A549 (cell line): ENCODE measurements at regions of chr17 and their contacts with region 1.

Region 1: DNA sequence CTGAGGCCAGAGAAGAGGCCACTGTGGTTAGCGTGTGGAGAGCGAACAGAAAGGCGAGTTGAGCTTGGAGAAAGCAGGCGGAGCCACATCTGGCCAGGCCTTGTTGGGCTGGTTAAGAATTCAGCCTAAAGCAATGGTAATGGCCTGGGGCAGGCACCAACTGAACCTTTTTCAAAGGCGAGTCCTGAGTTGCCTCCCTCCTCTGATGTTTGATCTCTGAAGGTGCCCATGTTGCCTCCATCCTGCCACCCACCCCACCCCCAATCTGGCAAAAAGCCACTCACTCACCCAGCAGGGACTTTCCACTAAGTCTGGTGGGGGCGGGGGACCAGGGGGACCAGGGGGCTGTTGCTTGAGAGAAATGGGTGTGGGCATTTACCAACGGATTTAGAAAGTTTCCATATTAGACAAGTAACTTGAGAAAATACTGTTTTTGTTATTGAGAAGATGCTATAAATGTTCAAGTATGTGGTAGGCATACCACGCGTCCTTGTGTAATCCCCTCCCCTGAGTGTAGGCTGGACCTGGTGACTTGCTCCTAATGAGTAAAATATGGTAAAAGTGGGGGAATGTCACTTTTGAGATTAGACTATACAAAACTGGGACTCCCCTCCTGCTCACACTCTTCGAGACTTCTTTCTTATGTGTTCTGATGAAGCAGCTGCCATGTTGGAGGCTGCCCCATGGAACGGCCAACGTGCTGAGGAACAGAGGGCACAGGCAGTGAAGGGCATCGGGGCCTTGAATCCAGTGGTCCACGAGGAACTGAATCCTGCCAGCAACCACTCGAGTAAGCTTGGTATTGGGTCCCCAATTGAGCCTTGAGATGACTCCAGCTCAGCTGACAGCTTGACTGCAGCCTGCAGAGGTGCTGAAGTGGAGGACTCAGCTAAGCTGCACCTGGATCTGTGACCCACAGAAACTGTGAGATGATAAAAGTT is 29.9 kb upstream of the TNS4 start:
- DNase-seq: no peak
- ATAC-seq: no peak
- H3K4me3 ChIP-seq: no peak overlapping the region
- H3K27ac ChIP-seq: peak overlapping the region; percentile 95 to 99
- H3K4me1 ChIP-seq: peaks cover 57% of the 10 kb centered on the region
- CTCF ChIP-seq: no peak
- EP300 ChIP-seq: no peak
- POLR2A ChIP-seq: no peak
- RAD21 ChIP-seq: no peak

Region 2: GRCh38 chr17:40303009-40303657 is 228.2 kb before region 1 on chr17:
- CTCF ChIA-PET with region 1: interaction called, 18 read pairs
- POLR2A ChIA-PET with region 1: no interaction called
- DNase-seq: peak; percentile 71 to 78
- ATAC-seq: peak; percentile 65 to 79
- H3K4me3 ChIP-seq: no peak overlapping the region
- H3K27ac ChIP-seq: peak overlapping the region; percentile 17 to 47; a peak in 4 of 6 replicates
- H3K4me1 ChIP-seq: peaks cover 38% of the 10 kb centered on the region
- CTCF ChIP-seq: peak; percentile 97
- EP300 ChIP-seq: no peak
- POLR2A ChIP-seq: no peak
- RAD21 ChIP-seq: peak; percentile 96 to 98

Region 3: GRCh38 chr17:40399185-40399584 is 132.1 kb before region 1 on chr17:
- CTCF ChIA-PET with region 1: interaction called, 63 read pairs
- POLR2A ChIA-PET with region 1: no interaction called
- DNase-seq: peak; percentile 67 to 78
- ATAC-seq: peak; percentile 86 to 91; a peak in 5 of 6 replicates
- H3K4me3 ChIP-seq: no peak overlapping the region
- H3K27ac ChIP-seq: peak overlapping the region; percentile 27 to 44; a peak in 3 of 6 replicates
- H3K4me1 ChIP-seq: peaks cover 10% of the 10 kb centered on the region; the same call in 1 of the 3 replicates
- CTCF ChIP-seq: peak; percentile 85
- EP300 ChIP-seq: no peak
- POLR2A ChIP-seq: no peak
- RAD21 ChIP-seq: peak; percentile 50 to 72

Region 4: DNA sequence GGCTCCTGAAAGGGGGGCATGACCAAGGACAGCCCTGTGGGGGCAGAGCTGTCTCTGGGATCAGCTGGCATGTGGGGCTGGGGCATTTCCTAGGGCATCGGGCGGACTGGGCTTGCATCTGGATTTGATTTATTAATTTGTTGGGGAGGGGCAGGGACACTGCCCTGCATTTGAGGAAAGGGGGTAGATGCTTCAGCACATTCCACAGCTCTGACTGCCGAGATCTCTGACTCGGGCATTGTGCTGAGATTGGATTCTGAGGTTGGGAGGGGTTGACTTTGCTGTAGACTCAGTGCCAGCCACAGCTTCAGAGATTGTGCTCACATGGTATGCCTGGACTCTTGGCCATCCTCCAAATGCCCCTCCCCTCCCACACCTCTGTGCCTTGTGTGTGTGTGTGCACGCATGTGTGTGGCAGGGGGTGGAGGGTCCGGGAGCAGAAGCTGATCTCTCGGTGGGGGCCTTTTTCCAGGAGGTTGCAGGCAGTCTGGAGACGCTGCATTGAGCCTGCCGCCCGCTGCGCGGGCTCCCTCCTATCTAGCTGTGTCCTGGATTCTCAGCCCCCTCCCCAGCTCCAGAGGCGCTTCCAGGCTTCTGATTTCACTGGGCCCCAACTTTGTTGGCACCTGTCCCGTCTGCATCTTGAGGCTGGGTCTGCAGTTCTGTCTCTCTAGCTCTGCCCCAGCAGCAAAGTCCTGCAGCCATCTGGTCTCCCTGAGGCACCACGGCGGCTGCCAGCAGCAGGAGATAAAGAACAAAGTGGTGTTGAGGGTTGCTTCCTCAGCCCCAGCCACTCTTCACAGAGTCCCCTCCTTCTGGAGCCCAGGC is 73.1 kb before region 1 on chr17:
- CTCF ChIA-PET with region 1: interaction called, 822 read pairs
- POLR2A ChIA-PET with region 1: interaction called, 177 read pairs
- DNase-seq: peak in 1 of 2 experiments; percentile 68
- ATAC-seq: peak in 1 of 2 experiments; percentile 7; a peak in 3 of 6 replicates
- H3K4me3 ChIP-seq: peak overlapping the region; percentile 16
- H3K27ac ChIP-seq: peak overlapping the region; percentile 71 to 90
- H3K4me1 ChIP-seq: peaks cover 100% of the 10 kb centered on the region
- CTCF ChIP-seq: no peak
- EP300 ChIP-seq: no peak; a peak in 1 of 5 replicates
- POLR2A ChIP-seq: no peak
- RAD21 ChIP-seq: no peak

Region 5: DNA sequence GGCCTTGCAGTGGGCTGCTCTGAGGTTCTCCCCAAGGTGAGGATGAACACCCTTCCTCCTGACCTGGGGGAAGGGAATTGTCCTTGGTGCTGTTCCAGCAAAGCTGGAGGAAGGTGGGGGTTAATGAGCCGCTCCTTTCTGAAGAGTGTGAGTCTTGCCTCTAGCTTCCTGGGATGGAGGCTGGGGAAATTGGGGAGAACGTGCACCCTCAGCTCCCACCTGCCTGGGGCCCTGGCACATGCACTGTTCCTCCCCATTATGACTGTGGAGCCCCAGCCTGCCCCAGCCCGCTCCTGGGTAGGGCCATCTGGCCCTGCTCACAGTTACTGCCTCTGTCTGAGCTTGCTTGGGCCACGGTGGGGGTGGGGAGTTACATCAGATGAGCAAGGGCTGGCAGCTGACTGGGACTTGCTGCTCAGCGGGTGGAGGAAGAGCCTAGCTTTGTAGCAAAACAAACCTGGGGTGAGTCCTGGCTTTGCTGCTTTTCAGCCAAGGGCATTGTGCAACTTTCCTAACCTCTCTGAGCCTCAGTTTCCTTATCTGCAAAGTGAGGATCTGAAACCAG is 41.0 kb before region 1 on chr17:
- CTCF ChIA-PET with region 1: interaction called, 379 read pairs
- POLR2A ChIA-PET with region 1: interaction called, 42 read pairs
- DNase-seq: peak in 1 of 2 experiments; percentile 76
- ATAC-seq: peak in 1 of 2 experiments; percentile 1; a peak in 2 of 6 replicates
- H3K4me3 ChIP-seq: no peak overlapping the region
- H3K27ac ChIP-seq: peak overlapping the region; percentile 96 to 97
- H3K4me1 ChIP-seq: peaks cover 98% of the 10 kb centered on the region
- CTCF ChIP-seq: no peak
- EP300 ChIP-seq: 0 out of 5 replicates have a peak, but pooled peaks have one; percentile 1 to 15
- POLR2A ChIP-seq: no peak
- RAD21 ChIP-seq: no peak

Region 6: GRCh38 chr17:40542558-40543411 is 11.5 kb after region 1 on chr17:
- CTCF ChIA-PET with region 1: interaction called, 1,144 read pairs
- POLR2A ChIA-PET with region 1: interaction called, 29 read pairs
- DNase-seq: peak; percentile 99 to 100
- ATAC-seq: peak; percentile 87 to 90
- H3K4me3 ChIP-seq: no peak overlapping the region
- H3K27ac ChIP-seq: peak overlapping the region; percentile 95 to 99
- H3K4me1 ChIP-seq: peaks cover 71% of the 10 kb centered on the region
- CTCF ChIP-seq: no peak
- EP300 ChIP-seq: peak; percentile 100
- POLR2A ChIP-seq: no peak
- RAD21 ChIP-seq: peak; percentile 4 to 55; a peak in 4 of 5 replicates